ENCODE measurements at regions of chr14 and their contacts with region 1.

Region 1: GRCh38 chr14:20343092-20343861 is at the start of gene PARP2:
- DNase-seq: peak; percentile 99
- ATAC-seq: peak; percentile 95
- H3K4me3 ChIP-seq: peak within 1 kb of the TSS; percentile 67 to 94
- H3K27ac ChIP-seq: peak within 1 kb of the TSS; percentile 95
- H3K4me1 ChIP-seq: peaks cover 5 to 15% of the 10 kb centered on the region in 2 experiments; a peak in 3 of 4 replicates
- H3K27me3 ChIP-seq: no peaks in the 10 kb centered on the region
- CTCF ChIP-seq: no peak
- POLR2A ChIP-seq: peak; percentile 100
- RAD21 ChIP-seq: no peak
- total RNA-seq, gene PARP2: 51.8 TPM

Region 2: DNA sequence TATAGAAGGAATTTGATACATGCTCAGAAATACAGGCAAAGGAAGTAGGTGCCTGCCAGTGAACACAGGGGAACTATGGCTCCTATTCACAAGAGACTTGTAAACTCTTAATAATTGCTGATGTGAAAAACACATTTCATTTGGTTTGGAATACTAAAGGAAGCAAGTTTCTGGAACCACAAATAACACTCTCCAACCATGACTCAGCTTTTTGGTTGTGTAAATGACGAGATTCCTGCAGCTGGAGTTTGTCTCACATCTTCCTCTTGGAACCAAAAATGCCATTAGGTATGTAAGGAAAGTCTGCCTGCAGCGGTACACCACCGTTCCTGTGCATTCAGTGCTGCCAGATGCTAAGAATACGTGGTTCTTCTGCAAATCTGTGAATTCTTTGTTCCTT is 124.2 kb before region 1 on chr14:
- CTCF ChIA-PET with region 1: no interaction called
- POLR2A ChIA-PET with region 1: no interaction called
- RAD21 ChIA-PET with region 1: no interaction called
- intact Hi-C with region 1: no loop called
- DNase-seq: no peak
- ATAC-seq: no peak
- H3K4me3 ChIP-seq: no peak overlapping the region
- H3K27ac ChIP-seq: no peak overlapping the region
- H3K4me1 ChIP-seq: no peaks in the 10 kb centered on the region
- H3K27me3 ChIP-seq: no peaks in the 10 kb centered on the region
- CTCF ChIP-seq: no peak
- POLR2A ChIP-seq: no peak
- RAD21 ChIP-seq: no peak

Region 3: GRCh38 chr14:20327005-20327869 is 16.0 kb before region 1 on chr14:
- CTCF ChIA-PET with region 1: interaction called, 9 read pairs
- POLR2A ChIA-PET with region 1: interaction called, 41 read pairs
- RAD21 ChIA-PET with region 1: interaction called in 1 of 2 experiments, 5 read pairs
- intact Hi-C with region 1: no loop called
- DNase-seq: peak; percentile 58
- ATAC-seq: peak; percentile 61
- H3K4me3 ChIP-seq: no peak overlapping the region
- H3K27ac ChIP-seq: peak overlapping the region; percentile 31; the same call in 1 of the 2 replicates
- H3K4me1 ChIP-seq: peaks cover 6 to 15% of the 10 kb centered on the region in 2 experiments; a peak in 3 of 4 replicates
- H3K27me3 ChIP-seq: no peaks in the 10 kb centered on the region
- CTCF ChIP-seq: peak; percentile 51 to 79 (median 63); a peak in 5 of 6 replicates
- POLR2A ChIP-seq: no peak
- RAD21 ChIP-seq: peak; percentile 73

Region 4: GRCh38 chr14:20400965-20401593 is 57.8 kb after region 1 on chr14:
- CTCF ChIA-PET with region 1: no interaction called
- POLR2A ChIA-PET with region 1: interaction called, 13 read pairs
- RAD21 ChIA-PET with region 1: no interaction called
- intact Hi-C with region 1: no loop called
- DNase-seq: peak; percentile 74
- ATAC-seq: peak; percentile 94
- H3K4me3 ChIP-seq: peak overlapping the region; percentile 19 to 48
- H3K27ac ChIP-seq: peak overlapping the region; percentile 92
- H3K4me1 ChIP-seq: peaks cover 24 to 36% of the 10 kb centered on the region in 2 experiments
- H3K27me3 ChIP-seq: no peaks in the 10 kb centered on the region
- CTCF ChIP-seq: no peak
- POLR2A ChIP-seq: no peak
- RAD21 ChIP-seq: no peak

Region 5: GRCh38 chr14:20454516-20455354 is 111.5 kb after region 1 on chr14 and contains the starts of genes APEX1 and OSGEP:
- CTCF ChIA-PET with region 1: no interaction called
- POLR2A ChIA-PET with region 1: interaction called, 29 read pairs
- RAD21 ChIA-PET with region 1: interaction called in 1 of 2 experiments, 3 read pairs
- intact Hi-C with region 1: loop called (anchors 1 kb)
- DNase-seq: peak; percentile 99
- ATAC-seq: peak; percentile 82
- H3K4me3 ChIP-seq: peak within 1 kb of the TSS; percentile 83 to 96
- H3K27ac ChIP-seq: peak within 1 kb of the TSS; percentile 97
- H3K4me1 ChIP-seq: peaks cover 12 to 16% of the 10 kb centered on the region in 2 experiments; a peak in 3 of 4 replicates
- H3K27me3 ChIP-seq: no peaks in the 10 kb centered on the region
- CTCF ChIP-seq: no peak
- POLR2A ChIP-seq: peak; percentile 59
- RAD21 ChIP-seq: no peak
- total RNA-seq, gene APEX1: 235 TPM
- total RNA-seq, gene OSGEP: 21.8 TPM

Region 6: DNA sequence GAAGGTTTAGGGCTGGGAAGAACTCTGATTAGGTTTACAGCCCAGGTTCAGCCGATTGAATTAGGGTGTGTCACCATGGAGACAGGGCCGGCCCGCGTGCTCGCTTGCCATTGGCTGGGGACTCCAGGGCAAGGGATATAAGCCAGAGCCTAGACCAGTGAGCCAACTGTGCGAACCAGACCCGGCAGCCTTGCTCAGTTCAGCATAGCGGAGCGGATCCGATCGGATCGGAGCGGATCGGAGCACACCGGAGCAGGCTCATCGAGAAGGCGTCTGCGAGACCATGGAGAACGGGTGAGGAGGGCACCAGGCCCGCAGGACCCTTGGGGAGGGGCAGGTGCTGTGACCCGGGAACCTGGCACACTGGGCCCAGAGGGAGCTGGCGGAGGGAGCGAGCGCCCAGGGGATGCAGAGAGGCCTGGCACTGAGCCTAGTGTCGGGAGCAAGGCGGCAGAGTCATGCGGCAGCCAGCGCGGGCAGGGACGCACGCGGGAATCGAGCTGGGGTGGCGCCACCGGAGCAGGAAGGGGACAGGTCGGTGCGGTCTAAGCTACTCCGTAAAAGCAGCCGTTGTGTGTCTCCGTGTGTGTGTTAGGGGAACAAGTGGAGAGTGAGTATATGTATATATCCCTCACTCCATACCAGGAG is 126.1 kb after region 1 on chr14 and contains the start of gene PNP:
- CTCF ChIA-PET with region 1: no interaction called
- POLR2A ChIA-PET with region 1: interaction called, 11 read pairs
- RAD21 ChIA-PET with region 1: no interaction called
- intact Hi-C with region 1: no loop called
- DNase-seq: peak; percentile 85
- ATAC-seq: peak; percentile 95
- H3K4me3 ChIP-seq: peak within 1 kb of the TSS; percentile 80 to 96
- H3K27ac ChIP-seq: peak within 1 kb of the TSS; percentile 86
- H3K4me1 ChIP-seq: peaks cover 10 to 15% of the 10 kb centered on the region in 2 experiments; a peak in 3 of 4 replicates
- H3K27me3 ChIP-seq: no peaks in the 10 kb centered on the region
- CTCF ChIP-seq: no peak
- POLR2A ChIP-seq: peak; percentile 99
- RAD21 ChIP-seq: 0 out of 2 replicates have a peak, but pooled peaks have one; percentile 8
- total RNA-seq, gene PNP: 63.0 TPM

Region 7: GRCh38 chr14:20855652-20856291 is 512.5 kb after region 1 on chr14:
- CTCF ChIA-PET with region 1: no interaction called
- POLR2A ChIA-PET with region 1: no interaction called
- RAD21 ChIA-PET with region 1: no interaction called
- intact Hi-C with region 1: no loop called
- DNase-seq: peak; percentile 73
- ATAC-seq: peak; percentile 96
- H3K4me3 ChIP-seq: no peak overlapping the region
- H3K27ac ChIP-seq: no peak overlapping the region
- H3K4me1 ChIP-seq: peaks cover 3 to 5% of the 10 kb centered on the region in 2 experiments; a peak in 2 of 4 replicates
- H3K27me3 ChIP-seq: peaks cover 16% of the 10 kb centered on the region; the same call in 1 of the 2 replicates
- CTCF ChIP-seq: peak; percentile 69 to 90 (median 79)
- POLR2A ChIP-seq: no peak
- RAD21 ChIP-seq: peak; percentile 86

Measured in HCT116 (cell line).